Naive thymus-derived CD4-positive, alpha-beta T cell (primary cell): ENCODE measurements at regions of chr1 and their contacts with region 1.

Region 1: GRCh38 chr1:67561704-67562113 is 123.3 kb upstream of the GADD45A start:
- DNase-seq: peak; percentile 51 to 84 (median 70)
- ATAC-seq: peak; percentile 80
- H3K4me3 ChIP-seq: no peak overlapping the region
- H3K4me3 Mint-ChIP-seq: no peak overlapping the region
- H3K27ac ChIP-seq: no peak overlapping the region
- H3K27ac Mint-ChIP-seq: no peak overlapping the region
- H3K4me1 ChIP-seq: no peaks in the 10 kb centered on the region
- H3K4me1 Mint-ChIP-seq: peaks cover 0 to 3% (median 0%) of the 10 kb centered on the region in 7 donors
- H3K27me3 ChIP-seq: no peaks in the 10 kb centered on the region
- H3K27me3 Mint-ChIP-seq: peaks cover 0 to 15% (median 5%) of the 10 kb centered on the region in 5 donors

Region 2: GRCh38 chr1:67535474-67535873 is 26.2 kb before region 1 on chr1:
- CTCF ChIA-PET with region 1: no interaction called
- POLR2A ChIA-PET with region 1: no interaction called
- intact Hi-C with region 1: loop called in 1 of 2 experiments (anchors 1 kb)
- DNase-seq: peak in 4 of 9 donors; percentile 3 to 42 (median 10)
- ATAC-seq: peak; percentile 72
- H3K4me3 ChIP-seq: no peak overlapping the region
- H3K4me3 Mint-ChIP-seq: no peak overlapping the region
- H3K27ac ChIP-seq: no peak overlapping the region
- H3K27ac Mint-ChIP-seq: no peak overlapping the region
- H3K4me1 ChIP-seq: no peaks in the 10 kb centered on the region
- H3K4me1 Mint-ChIP-seq: no peaks in the 10 kb centered on the region
- H3K27me3 ChIP-seq: no peaks in the 10 kb centered on the region
- H3K27me3 Mint-ChIP-seq: peaks cover 0 to 10% (median 0%) of the 10 kb centered on the region in 5 donors

Region 3: GRCh38 chr1:67766141-67766978 is 204.7 kb after region 1 on chr1:
- CTCF ChIA-PET with region 1: interaction called, 100 read pairs
- POLR2A ChIA-PET with region 1: no interaction called
- intact Hi-C with region 1: no loop called
- DNase-seq: peak in 8 of 9 donors; percentile 3 to 52 (median 39)
- ATAC-seq: peak; percentile 69
- H3K4me3 ChIP-seq: no peak overlapping the region
- H3K4me3 Mint-ChIP-seq: peak overlapping the region in 9 of 10 donors; percentile 47 to 80 (median 68)
- H3K27ac ChIP-seq: no peak overlapping the region
- H3K27ac Mint-ChIP-seq: peak overlapping the region in 1 of 9 donors; percentile 11
- H3K4me1 ChIP-seq: peaks cover 0 to 5% of the 10 kb centered on the region in 2 donors
- H3K4me1 Mint-ChIP-seq: peaks cover 0 to 9% (median 6%) of the 10 kb centered on the region in 7 donors
- H3K27me3 ChIP-seq: peaks cover 0 to 11% of the 10 kb centered on the region in 2 donors
- H3K27me3 Mint-ChIP-seq: peaks cover 33 to 59% (median 40%) of the 10 kb centered on the region in 5 donors